Cardiac septum (tissue), 1 donor: ENCODE measurements at regions of chr15 and their contacts with region 1.

Region 1: GRCh38 chr15:39782441-39783138 is at the start of gene FSIP1:
- DNase-seq: peak; percentile 98
- total RNA-seq, gene FSIP1: 2.0 TPM

Region 2: DNA sequence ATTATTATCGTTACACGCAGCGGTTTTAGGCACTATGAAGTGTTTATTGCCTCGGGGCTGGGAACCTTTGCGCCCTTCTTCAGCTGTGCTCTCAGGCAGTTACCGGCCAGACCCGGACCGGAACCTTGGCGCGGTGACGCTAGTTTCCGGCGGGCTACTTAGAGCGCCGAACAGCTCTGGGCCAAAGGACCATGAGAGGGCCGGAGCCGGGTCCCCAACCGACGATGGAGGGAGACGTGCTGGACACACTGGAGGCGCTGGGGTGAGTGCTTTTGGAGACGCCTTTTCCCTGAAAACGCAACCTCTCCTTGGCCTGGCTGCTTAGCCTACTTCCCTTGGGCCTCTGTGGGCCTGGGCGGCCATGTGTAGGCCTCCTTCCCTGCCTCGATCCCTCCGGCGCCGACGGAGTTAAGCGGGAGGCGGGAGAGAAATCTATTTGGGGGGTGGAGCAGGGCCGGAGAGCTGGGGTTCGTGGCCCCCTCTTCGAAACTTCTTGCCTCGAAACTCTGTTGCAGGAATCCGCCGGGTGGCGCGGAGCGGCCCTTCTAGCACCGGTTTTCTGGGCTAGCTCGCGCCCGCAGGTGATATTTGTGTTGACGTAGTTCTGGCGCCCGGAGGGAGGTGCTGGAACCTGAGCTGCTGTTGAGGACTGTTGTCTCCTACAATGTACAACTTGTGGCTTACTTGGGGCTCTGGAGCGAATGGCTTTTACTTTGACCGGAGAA is 1328.5 kb before region 1 on chr15 and contains the start of gene FAM98B:
- intact Hi-C with region 1: loop called (anchors 10 kb)
- DNase-seq: peak; percentile 93
- total RNA-seq, gene FAM98B: 25.6 TPM

Region 3: DNA sequence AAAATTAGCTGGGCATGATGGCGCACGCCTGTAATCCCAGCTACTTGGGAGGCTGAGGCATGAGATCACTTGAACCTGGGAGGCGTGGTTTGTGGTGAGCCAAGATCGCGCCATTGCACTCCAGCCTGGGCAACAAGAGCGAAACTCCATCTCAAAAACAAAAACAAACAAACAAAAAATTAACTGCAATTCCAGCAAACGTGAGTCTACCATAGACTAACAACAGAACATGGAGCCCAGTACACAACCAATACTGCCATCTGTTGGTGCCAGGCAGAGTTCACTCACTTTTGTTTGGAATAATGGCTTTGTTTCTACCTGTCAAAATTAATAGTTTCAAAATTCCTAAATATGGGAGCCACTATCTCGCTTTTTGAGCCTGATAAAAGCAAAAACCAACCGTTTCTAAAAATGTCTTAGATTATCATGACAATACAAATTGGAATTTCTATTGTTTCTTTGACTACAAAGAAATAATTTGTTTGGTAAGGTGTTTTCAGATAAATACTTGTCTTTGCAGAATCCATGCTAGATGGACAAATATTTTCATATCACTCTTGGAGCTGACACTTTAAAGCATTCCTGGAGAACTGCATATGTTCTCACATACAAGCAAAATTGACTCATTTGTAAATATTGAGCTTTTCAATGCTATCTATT is 92.4 kb after region 1 on chr15:
- intact Hi-C with region 1: loop called (anchors 5 kb)
- DNase-seq: no peak

Region 4: DNA sequence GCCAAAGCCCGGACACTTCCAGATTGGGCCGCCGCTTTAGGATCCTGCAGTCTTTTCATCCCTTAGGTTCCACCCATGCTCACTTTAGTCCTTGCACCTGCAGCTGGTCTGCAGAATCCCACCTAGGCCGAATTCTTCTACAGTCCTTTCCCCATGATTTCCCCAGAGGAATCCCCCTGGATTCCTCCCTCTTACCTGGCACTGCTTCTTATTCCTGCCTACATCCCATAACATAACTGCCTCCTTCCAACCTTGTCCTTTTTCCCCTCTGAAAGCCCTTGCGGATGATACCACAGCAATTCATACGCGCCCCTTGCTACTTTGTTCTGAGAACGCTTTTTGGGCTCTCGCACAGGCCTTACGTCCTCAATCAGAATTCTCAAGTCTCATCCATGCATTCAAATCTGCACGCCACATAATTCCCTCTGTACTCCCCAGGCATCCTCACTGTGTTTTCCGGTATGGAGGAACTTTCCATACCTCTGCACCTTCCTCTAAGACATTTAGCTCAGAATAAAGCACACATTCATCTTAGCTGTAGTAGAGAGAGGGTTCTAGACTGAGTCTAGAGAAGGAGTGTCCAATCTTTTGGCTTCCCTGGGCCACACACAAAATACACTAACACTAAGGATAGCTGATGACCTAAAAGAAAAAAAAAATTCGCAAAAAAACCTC is 151.9 kb after region 1 on chr15:
- intact Hi-C with region 1: loop called (anchors 5 kb)
- DNase-seq: no peak

Region 5: GRCh38 chr15:39976291-39977274 is 194.0 kb after region 1 on chr15:
- intact Hi-C with region 1: loop called (anchors 5 kb)
- DNase-seq: peak; percentile 82

Region 6: GRCh38 chr15:40038638-40039543 is 256.3 kb after region 1 on chr15 and contains the start of gene SRP14:
- intact Hi-C with region 1: loop called (anchors 10 kb)
- DNase-seq: peak; percentile 97
- total RNA-seq, gene SRP14: 168 TPM